HCT116 (cell line): ENCODE measurements at regions of chr19 and their contacts with region 1.

Region 1: DNA sequence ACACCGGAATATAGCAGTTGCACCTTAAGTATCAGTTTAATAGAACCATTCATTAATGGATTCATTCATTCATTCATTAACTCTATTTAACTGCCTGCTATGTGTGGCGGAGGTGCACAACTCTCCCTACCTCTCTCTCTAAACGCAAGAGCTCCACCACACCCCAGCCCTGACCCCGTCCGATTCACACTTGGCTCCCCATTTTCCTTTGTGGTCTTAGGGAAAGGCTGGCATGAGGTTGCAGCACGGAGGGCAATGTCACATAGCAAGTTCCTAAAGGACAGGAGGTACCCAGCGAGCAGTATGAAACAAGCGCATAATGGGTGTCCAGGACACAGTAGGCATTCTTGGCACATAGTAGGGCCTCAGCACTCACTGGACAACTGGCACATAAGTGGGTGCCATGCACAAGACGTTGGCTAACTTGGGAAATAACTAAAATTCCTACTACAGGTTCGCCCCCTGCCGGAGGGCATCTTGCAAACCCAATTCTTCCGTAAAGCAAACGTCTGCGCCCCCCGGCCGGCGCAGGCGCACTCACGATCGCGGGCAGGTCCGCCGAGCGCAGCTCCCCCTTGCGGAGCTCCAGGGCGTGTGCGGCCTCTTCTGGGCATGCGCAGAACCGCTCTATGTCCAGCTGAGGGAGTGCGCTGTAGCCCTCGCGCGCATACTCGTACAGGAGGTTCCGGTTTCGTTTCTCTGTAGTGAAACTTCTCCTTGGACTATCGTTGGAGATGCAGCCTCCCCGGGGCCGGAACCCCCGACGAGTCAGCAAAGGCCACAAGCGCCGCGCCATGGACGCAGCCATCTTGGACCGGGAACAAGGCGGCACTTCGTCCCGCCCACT is at the start of gene SARS2:
- DNase-seq: peak; percentile 89
- ATAC-seq: peak; percentile 73
- H3K4me3 ChIP-seq: peak within 1 kb of the TSS; percentile 98 to 100
- H3K27ac ChIP-seq: peak within 1 kb of the TSS; percentile 82
- H3K4me1 ChIP-seq: peaks cover 11 to 20% of the 10 kb centered on the region in 2 experiments; a peak in 3 of 4 replicates
- H3K27me3 ChIP-seq: no peaks in the 10 kb centered on the region
- CTCF ChIP-seq: peak; percentile 98 to 99 (median 99)
- POLR2A ChIP-seq: peak; percentile 70
- RAD21 ChIP-seq: peak; percentile 88
- total RNA-seq, gene SARS2: 58.2 TPM

Region 2: DNA sequence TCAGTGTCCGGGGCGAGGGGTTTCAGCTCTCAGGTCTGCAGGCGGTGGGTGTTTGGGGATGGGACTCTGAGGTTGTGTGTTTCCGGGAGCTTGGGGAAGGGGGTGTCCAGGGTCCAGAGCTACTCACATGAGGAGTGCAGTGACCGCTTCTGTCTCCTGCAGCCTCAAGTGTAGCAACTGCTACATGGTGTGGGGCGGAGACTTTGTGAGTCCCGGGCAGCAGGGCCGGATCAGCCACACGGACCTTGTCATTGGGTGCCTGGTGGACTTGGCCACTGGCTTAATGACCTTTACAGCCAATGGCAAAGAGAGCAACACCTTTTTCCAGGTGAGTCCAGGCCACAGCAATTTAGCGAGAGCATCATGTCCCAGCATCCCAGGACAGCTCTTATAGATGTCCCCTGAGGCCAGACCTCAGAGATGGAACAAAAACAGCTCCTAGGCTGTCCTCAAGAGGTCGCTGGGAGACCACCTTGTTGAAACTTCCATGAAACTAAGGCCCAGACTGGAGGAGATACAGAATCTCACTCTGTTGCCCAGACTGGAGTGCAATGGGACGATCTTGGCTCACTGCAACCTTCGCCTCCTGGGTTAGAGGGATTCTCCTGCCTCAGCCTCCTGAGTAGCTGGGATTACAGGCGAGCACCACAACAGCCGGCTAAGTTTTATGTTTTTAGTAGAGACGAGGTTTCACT is 451.7 kb before region 1 on chr19:
- CTCF ChIA-PET with region 1: interaction called, 9 read pairs
- POLR2A ChIA-PET with region 1: no interaction called
- RAD21 ChIA-PET with region 1: no interaction called
- intact Hi-C with region 1: loop called (anchors 1 kb)
- DNase-seq: peak; percentile 35
- ATAC-seq: peak; percentile 90
- H3K4me3 ChIP-seq: no peak overlapping the region
- H3K27ac ChIP-seq: no peak overlapping the region
- H3K4me1 ChIP-seq: no peaks in the 10 kb centered on the region
- H3K27me3 ChIP-seq: no peaks in the 10 kb centered on the region
- CTCF ChIP-seq: peak; percentile 46 to 60 (median 57); a peak in 5 of 6 replicates
- POLR2A ChIP-seq: no peak
- RAD21 ChIP-seq: peak; percentile 79

Region 3: DNA sequence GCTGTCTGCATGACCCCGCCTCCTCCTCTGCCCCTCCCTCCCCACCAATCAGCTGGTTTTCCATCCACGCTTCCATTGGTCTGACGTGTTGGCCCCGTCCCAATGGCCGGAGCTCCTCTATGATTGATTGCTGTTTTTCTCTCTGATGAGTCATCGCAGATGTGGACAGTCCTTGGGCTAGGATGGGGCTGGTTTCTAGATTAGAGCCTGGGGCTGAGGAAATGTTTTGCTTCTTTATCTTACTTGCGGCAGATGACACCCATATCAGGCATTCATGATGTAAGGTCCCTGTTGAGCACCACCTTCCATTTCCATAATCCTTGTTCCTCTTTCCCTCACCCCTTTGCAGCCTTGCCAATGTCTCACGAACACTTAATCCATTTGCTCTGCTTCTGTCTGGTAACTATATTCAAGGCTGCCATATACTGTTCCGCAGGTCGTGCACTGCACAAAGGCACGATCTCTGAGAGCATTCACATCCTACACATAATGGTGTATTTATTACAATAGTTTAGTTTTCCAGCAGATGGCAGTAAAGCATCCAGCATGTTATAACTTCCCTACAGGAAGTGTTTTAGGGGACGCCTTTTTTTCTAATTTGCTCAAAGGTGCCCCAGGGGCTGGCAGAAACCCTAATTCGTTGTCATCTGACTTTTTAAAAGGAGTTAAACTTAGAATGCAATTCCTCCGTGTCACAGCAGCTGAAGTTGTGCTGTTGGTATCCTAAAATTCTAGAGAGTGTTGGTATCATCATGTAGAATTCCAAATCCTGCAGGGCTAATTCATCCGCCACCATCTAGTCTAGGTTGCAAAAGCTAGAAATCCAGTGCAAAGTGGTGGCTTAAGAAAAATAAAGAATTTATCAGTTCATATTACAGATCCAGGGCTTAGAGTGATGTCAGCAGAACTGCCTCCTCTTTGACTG is 385.9 kb before region 1 on chr19:
- CTCF ChIA-PET with region 1: interaction called, 6 read pairs
- POLR2A ChIA-PET with region 1: no interaction called
- RAD21 ChIA-PET with region 1: no interaction called
- intact Hi-C with region 1: loop called (anchors 1 kb)
- DNase-seq: peak; percentile 87
- ATAC-seq: peak; percentile 89
- H3K4me3 ChIP-seq: peak overlapping the region; percentile 34 to 49
- H3K27ac ChIP-seq: peak overlapping the region; percentile 66
- H3K4me1 ChIP-seq: peaks cover 10 to 21% of the 10 kb centered on the region in 2 experiments
- H3K27me3 ChIP-seq: no peaks in the 10 kb centered on the region
- CTCF ChIP-seq: peak; percentile 57 to 89 (median 80)
- POLR2A ChIP-seq: peak; percentile 40
- RAD21 ChIP-seq: peak; percentile 91

Region 4: GRCh38 chr19:38729653-38730469 is 200.3 kb before region 1 on chr19:
- CTCF ChIA-PET with region 1: interaction called, 6 read pairs
- POLR2A ChIA-PET with region 1: no interaction called
- RAD21 ChIA-PET with region 1: no interaction called
- intact Hi-C with region 1: loop called (anchors 5 kb)
- DNase-seq: peak; percentile 24
- ATAC-seq: peak; percentile 74
- H3K4me3 ChIP-seq: no peak overlapping the region
- H3K27ac ChIP-seq: no peak overlapping the region
- H3K4me1 ChIP-seq: peaks cover 11 to 41% of the 10 kb centered on the region in 2 experiments; a peak in 3 of 4 replicates
- H3K27me3 ChIP-seq: no peaks in the 10 kb centered on the region
- CTCF ChIP-seq: peak; percentile 67 to 92 (median 87); a peak in 5 of 6 replicates
- POLR2A ChIP-seq: no peak
- RAD21 ChIP-seq: peak; percentile 62

Region 5: GRCh38 chr19:38831142-38831605 is 99.0 kb before region 1 on chr19:
- CTCF ChIA-PET with region 1: no interaction called
- POLR2A ChIA-PET with region 1: no interaction called
- RAD21 ChIA-PET with region 1: no interaction called
- intact Hi-C with region 1: no loop called
- DNase-seq: no peak
- ATAC-seq: peak; percentile 53
- H3K4me3 ChIP-seq: peak overlapping the region; percentile 61 to 68
- H3K27ac ChIP-seq: peak overlapping the region; percentile 66
- H3K4me1 ChIP-seq: peaks cover 2 to 16% of the 10 kb centered on the region in 2 experiments; a peak in 3 of 4 replicates
- H3K27me3 ChIP-seq: no peaks in the 10 kb centered on the region
- CTCF ChIP-seq: no peak
- POLR2A ChIP-seq: no peak
- RAD21 ChIP-seq: no peak

Region 6: DNA sequence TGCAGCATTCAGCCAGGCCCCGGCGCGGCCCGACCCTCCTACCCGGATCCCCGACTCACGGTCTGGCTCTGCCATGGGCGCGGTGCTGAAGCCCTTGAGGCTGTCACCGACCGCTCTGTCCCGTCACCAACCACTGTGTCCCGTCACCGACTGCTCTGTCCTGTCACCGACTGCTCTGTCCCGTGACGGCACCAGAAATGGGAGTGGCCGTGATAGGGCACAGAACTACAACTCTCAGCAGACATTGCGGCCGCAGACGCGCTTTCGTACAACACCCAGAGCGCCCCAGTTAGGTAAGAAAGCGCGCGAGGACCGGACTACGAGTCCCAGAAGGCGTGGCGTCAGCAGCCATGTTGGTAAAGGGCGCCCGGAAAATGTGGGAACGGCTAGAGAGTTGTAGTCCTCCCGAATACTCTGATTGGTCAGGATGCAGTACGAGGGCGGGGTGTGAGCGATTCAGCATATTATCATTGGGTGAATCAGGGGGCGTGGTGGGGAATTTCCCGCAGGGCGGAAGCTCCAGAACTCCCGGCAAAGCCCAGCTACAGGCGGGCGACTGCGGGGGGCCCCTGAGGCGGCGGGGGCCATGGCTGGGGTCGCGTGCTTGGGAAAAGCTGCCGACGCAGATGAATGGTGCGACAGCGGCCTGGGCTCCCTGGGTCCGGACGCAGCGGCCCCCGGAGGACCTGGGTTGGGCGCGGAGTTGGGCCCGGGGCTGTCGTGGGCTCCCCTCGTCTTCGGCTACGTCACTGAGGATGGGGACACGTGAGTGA is 30.5 kb before region 1 on chr19 and contains the starts of genes NFKBIB and SIRT2:
- CTCF ChIA-PET with region 1: interaction called, 12 read pairs
- POLR2A ChIA-PET with region 1: interaction called, 7 read pairs
- RAD21 ChIA-PET with region 1: no interaction called
- intact Hi-C with region 1: no loop called
- DNase-seq: peak; percentile 100
- ATAC-seq: peak; percentile 94
- H3K4me3 ChIP-seq: peak within 1 kb of the TSS; percentile 68 to 85
- H3K27ac ChIP-seq: peak within 1 kb of the TSS; percentile 59
- H3K4me1 ChIP-seq: peaks cover 0 to 18% of the 10 kb centered on the region in 2 experiments; a peak in 2 of 4 replicates
- H3K27me3 ChIP-seq: no peaks in the 10 kb centered on the region
- CTCF ChIP-seq: no peak
- POLR2A ChIP-seq: peak; percentile 43
- RAD21 ChIP-seq: no peak
- total RNA-seq, gene NFKBIB: 51.2 TPM
- total RNA-seq, gene SIRT2: 15.4 TPM

Region 7: DNA sequence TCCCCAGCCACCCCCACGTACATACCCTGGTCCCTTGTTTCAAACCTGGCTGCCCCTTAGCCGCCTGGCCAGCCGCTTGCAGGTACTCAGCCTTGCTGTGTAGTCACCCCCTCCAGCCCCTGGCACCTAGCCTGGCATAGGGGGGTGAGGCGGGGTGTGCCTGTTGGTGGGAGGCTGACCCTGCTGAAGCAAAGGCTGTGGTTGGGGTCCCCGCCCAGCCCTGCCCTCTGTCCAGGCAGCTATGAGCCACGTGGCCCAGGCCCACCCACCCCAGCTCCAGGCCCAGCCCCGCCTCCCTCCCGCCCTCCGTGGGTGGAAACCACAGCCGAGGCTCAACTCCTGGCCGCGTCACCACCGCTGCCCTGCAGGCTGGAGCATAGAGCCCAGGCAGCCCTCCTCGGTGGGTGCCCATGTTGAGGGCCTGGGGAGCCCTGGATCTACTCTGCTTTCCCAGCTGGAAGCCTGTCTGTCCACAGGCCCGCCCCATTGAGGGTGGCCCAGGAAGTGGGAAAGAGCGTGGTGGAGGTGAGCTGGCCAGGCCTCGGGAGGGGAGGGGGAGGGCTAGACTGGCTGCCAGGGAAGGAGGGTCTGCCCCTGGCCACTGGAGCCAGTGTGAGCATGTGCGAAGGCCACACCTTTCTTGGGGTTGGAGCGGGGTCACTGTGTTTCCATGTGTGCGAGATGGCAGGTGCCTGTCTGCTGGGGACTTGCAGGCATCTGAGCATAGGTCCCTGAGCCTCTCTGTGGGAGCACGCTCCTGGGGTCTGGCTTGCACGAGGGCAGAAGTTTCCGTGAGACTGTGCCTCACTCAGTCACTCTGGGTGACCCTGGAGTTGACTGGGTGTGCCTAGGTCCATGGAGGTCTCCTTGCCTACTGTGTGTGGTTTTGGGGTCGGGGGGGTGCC is 226.4 kb after region 1 on chr19:
- CTCF ChIA-PET with region 1: no interaction called
- POLR2A ChIA-PET with region 1: no interaction called
- RAD21 ChIA-PET with region 1: no interaction called
- intact Hi-C with region 1: no loop called
- DNase-seq: no peak
- ATAC-seq: no peak
- H3K4me3 ChIP-seq: no peak overlapping the region
- H3K27ac ChIP-seq: peak overlapping the region; percentile 75; the same call in 1 of the 2 replicates
- H3K4me1 ChIP-seq: peaks cover 37 to 50% of the 10 kb centered on the region in 2 experiments
- H3K27me3 ChIP-seq: no peaks in the 10 kb centered on the region
- CTCF ChIP-seq: no peak
- POLR2A ChIP-seq: no peak
- RAD21 ChIP-seq: no peak